ENCODE measurements at regions of chr1 and their contacts with region 1.

Region 1: GRCh38 chr1:67214420-67215174 is 48.3 kb downstream of the IL23R start:
- DNase-seq: peak; percentile 72
- ATAC-seq: no peak
- H3K4me3 Mint-ChIP-seq: no peak overlapping the region
- H3K27ac Mint-ChIP-seq: no peak overlapping the region
- H3K4me1 Mint-ChIP-seq: peaks cover 4% of the 10 kb centered on the region
- H3K27me3 Mint-ChIP-seq: no peaks in the 10 kb centered on the region

Region 2: DNA sequence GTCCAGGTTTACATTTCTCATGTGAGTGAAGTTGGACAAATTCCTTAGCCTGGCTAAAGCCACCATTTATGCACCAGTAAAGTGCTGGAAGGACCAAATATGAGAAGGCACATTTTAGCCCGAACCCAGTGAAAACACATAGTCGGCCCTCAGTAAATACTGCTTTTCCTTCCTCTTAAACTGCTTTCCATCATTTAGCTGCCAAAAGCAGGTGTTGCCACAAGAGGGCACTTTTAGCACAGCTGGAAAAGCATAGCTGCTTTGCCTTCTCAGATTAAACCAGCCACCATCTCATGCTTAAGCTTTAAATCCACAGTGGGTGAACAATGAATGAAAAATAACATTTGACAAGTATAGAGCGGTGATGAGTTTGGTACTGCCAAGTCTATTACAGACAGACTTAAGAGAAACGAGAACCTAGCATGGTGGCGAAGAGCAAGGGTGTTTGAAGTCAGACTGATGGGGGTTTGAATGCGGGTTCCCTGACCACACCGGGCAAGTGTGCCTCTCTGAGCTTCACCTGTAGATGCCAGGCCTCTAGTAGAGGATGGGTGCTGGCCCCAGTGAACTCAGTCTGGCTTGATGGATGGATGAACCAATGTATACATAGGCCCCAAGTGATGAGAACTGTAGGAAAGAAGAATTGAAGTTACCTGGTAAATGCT is 218.4 kb before region 1 on chr1:
- CTCF ChIA-PET with region 1: interaction called, 56 read pairs
- DNase-seq: peak; percentile 76
- ATAC-seq: peak; percentile 71
- H3K4me3 Mint-ChIP-seq: no peak overlapping the region
- H3K27ac Mint-ChIP-seq: no peak overlapping the region
- H3K4me1 Mint-ChIP-seq: peaks cover 14% of the 10 kb centered on the region
- H3K27me3 Mint-ChIP-seq: no peaks in the 10 kb centered on the region

Region 3: DNA sequence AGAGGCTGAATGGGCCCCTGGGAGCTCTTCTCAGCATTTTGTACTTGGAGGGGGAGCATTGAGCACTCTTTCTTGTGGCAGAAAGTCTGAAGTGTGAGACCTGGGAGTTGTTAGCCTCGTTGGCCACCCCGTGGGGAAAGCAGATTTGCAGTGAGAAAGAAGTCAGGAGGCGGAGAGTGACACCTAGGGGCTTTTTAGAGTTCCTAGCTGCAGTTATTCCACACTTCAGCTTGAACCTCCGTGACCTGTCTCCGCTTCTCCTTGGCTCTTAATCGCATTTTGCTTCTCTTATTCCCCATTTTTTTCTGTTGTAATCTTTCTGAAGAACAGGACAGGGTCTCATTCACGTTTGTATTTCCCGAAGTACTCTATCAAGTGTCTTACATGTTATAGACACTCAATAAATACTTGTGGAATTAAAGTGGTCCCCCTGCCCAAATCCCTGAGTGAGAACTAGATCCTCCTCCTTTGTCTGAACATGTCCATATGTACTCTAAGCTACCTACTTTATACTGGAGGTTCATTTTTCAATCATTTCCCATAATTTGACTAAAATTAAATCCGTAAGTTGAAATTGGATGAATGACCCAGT is 65.3 kb before region 1 on chr1:
- CTCF ChIA-PET with region 1: interaction called, 157 read pairs
- DNase-seq: peak; percentile 72
- ATAC-seq: peak; percentile 88
- H3K4me3 Mint-ChIP-seq: no peak overlapping the region
- H3K27ac Mint-ChIP-seq: no peak overlapping the region
- H3K4me1 Mint-ChIP-seq: peaks cover 24% of the 10 kb centered on the region
- H3K27me3 Mint-ChIP-seq: peaks cover 38% of the 10 kb centered on the region

Region 4: DNA sequence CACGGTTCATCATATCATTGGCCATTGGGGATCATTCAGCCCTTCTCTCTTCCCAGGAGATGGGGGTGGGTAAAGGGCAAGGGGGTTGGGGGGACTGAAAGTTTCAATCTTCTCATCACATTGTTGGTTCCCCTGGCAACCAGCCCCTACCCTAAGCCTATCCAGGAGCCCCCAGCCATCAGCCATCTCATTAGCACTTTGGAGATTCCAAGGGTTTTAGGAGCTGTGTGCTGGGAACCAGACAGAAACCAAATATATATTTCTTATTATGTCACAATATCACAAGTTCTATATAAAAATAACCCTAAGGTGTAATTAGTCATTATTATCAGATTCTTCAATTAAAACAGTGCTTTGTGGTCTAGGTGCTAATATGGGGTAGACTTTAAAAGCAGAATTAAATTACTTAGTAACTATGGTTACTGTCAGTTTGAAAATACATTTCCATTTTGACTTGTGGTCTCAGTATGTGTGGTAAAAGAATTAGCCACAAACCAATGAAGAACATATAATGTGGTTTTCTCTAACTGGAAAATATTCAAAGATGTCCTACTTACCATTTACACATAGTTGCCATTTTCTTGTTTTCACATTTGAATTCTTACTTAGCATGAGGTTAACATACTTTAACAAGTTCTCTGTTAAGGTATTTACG is 20.3 kb before region 1 on chr1:
- CTCF ChIA-PET with region 1: interaction called, 38 read pairs
- DNase-seq: no peak
- ATAC-seq: peak; percentile 66
- H3K4me3 Mint-ChIP-seq: no peak overlapping the region
- H3K27ac Mint-ChIP-seq: peak overlapping the region; percentile 69
- H3K4me1 Mint-ChIP-seq: peaks cover 25% of the 10 kb centered on the region
- H3K27me3 Mint-ChIP-seq: peaks cover 8% of the 10 kb centered on the region

Region 5: GRCh38 chr1:67227196-67227595 is 12.6 kb after region 1 on chr1:
- CTCF ChIA-PET with region 1: interaction called, 30 read pairs
- DNase-seq: no peak
- ATAC-seq: no peak
- H3K4me3 Mint-ChIP-seq: no peak overlapping the region
- H3K27ac Mint-ChIP-seq: no peak overlapping the region
- H3K4me1 Mint-ChIP-seq: peaks cover 3% of the 10 kb centered on the region
- H3K27me3 Mint-ChIP-seq: peaks cover 20% of the 10 kb centered on the region

Region 6: GRCh38 chr1:67500413-67500959 is 285.9 kb after region 1 on chr1:
- CTCF ChIA-PET with region 1: interaction called, 141 read pairs
- DNase-seq: peak; percentile 91
- ATAC-seq: peak; percentile 99
- H3K4me3 Mint-ChIP-seq: no peak overlapping the region
- H3K27ac Mint-ChIP-seq: no peak overlapping the region
- H3K4me1 Mint-ChIP-seq: peaks cover 5% of the 10 kb centered on the region
- H3K27me3 Mint-ChIP-seq: peaks cover 8% of the 10 kb centered on the region